Prostate gland (tissue), 2 donors: ENCODE measurements at regions of chr1 and their contacts with region 1.

Region 1: GRCh38 chr1:55375617-55376258 is 160.6 kb upstream of the USP24 start:
- DNase-seq: peak; percentile 13
- H3K4me3 ChIP-seq: no peak overlapping the region
- H3K27ac ChIP-seq: peak overlapping the region; percentile 14 to 58
- H3K4me1 ChIP-seq: no peaks in the 10 kb centered on the region
- H3K27me3 ChIP-seq: no peaks in the 10 kb centered on the region
- CTCF ChIP-seq: peak; percentile 62 to 82 (median 75)
- POLR2A ChIP-seq: no peak

Region 2: DNA sequence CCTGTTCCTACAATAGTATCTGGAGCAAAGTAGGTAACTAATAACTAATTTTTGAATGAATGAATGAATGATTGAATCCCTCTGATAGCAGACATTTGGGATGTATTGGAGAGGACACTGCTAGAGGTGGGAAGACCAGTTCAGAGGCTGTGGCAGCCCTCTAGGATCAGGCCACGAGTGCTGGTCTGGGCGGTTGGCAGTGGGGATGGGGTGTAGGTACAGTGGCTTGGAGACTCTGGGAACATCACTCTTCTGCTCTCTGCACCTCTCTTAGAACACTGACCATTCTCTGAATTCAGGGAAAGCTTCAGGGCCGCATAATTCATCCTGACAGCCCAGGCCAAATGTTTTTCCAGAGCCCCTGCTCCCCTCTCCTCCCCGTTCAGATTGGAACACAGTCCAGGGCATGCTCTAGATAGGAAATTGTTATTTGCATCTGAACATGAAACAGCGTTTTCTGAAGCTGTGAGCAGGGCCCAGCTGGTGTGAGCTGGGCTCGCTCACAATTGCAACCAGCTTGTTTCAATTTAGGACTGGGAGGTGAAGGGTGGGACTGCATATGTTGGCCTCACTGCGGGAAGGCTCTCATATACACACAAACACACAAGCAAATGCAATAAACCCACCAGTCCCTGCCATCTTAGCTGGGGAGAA is 92.5 kb after region 1 on chr1:
- intact Hi-C with region 1: loop called (anchors 5 kb)
- DNase-seq: no peak
- H3K4me3 ChIP-seq: no peak overlapping the region
- H3K27ac ChIP-seq: no peak overlapping the region
- H3K4me1 ChIP-seq: no peaks in the 10 kb centered on the region
- H3K27me3 ChIP-seq: no peaks in the 10 kb centered on the region
- CTCF ChIP-seq: no peak
- POLR2A ChIP-seq: no peak

Region 3: DNA sequence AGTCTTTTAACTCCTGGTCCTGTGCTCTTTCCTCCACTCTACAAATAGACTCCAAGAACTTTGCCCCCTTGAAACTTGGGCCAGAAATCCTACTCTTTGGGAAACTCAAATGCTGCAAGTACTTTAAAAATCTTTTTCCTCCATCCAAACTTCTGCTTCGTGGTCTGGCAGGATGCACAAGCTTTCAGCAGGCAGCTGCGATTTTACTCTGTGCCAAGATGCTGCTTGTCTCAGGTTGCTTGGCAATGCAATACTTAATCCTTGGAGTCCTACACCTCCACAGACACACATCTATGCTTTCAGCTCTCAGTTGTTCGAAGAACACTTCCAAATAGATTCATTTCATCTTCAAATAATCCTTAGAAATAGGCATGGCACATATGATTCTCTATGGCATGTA is 274.7 kb after region 1 on chr1:
- intact Hi-C with region 1: loop called (anchors 5 kb)
- DNase-seq: no peak
- H3K4me3 ChIP-seq: no peak overlapping the region
- H3K27ac ChIP-seq: no peak overlapping the region
- H3K4me1 ChIP-seq: no peaks in the 10 kb centered on the region
- H3K27me3 ChIP-seq: no peaks in the 10 kb centered on the region
- CTCF ChIP-seq: no peak
- POLR2A ChIP-seq: no peak

Region 4: GRCh38 chr1:55974714-55975511 is 599.2 kb after region 1 on chr1:
- intact Hi-C with region 1: loop called (anchors 5 kb)
- DNase-seq: no peak
- H3K4me3 ChIP-seq: no peak overlapping the region
- H3K27ac ChIP-seq: peak overlapping the region; percentile 17 to 45
- H3K4me1 ChIP-seq: no peaks in the 10 kb centered on the region
- H3K27me3 ChIP-seq: no peaks in the 10 kb centered on the region
- CTCF ChIP-seq: no peak
- POLR2A ChIP-seq: no peak

Region 5: GRCh38 chr1:56584910-56585528 is 1209.3 kb after region 1 on chr1:
- intact Hi-C with region 1: loop called (anchors 2 kb)
- DNase-seq: peak; percentile 30
- H3K4me3 ChIP-seq: no peak overlapping the region
- H3K27ac ChIP-seq: no peak overlapping the region
- H3K4me1 ChIP-seq: no peaks in the 10 kb centered on the region
- H3K27me3 ChIP-seq: no peaks in the 10 kb centered on the region
- CTCF ChIP-seq: peak; percentile 51 to 89 (median 84)
- POLR2A ChIP-seq: no peak